Panc1 (cell line): ENCODE measurements at regions of chr15 and their contacts with region 1.

Region 1: DNA sequence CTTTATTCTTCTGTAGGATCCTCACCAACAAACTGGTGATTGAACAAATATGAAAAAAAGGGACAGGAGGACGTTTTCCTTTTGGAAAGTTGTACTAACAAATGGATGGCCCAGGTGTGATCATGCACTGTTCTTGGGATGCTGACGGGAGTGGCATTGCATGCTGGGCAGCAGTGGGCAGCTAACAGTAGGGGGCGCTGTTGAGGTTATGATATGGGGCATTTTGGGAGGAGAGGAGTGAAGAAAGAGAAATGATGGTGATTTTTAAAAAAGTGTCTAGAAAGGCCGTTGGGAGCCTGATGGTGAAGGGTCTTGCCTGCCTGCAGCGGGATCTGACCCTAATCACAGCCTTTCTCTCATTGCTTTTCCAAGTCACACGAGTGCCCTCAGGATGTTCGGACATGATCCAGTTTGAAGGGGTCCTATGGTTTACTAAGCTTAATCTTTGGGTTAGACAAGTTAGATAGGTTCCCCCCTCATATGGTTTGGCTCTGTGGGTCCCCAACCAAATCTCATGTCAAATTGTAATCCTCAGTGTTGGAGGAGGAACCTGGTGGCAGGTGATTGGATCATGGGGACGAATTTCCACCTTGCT is 46.2 kb upstream of the PRTG start:
- DNase-seq: no peak
- ATAC-seq: no peak
- H3K4me3 ChIP-seq: no peak overlapping the region
- H3K27ac ChIP-seq: no peak overlapping the region
- H3K4me1 ChIP-seq: no peaks in the 10 kb centered on the region
- H3K27me3 ChIP-seq: no peaks in the 10 kb centered on the region
- CTCF ChIP-seq: peak; percentile 84

Region 2: DNA sequence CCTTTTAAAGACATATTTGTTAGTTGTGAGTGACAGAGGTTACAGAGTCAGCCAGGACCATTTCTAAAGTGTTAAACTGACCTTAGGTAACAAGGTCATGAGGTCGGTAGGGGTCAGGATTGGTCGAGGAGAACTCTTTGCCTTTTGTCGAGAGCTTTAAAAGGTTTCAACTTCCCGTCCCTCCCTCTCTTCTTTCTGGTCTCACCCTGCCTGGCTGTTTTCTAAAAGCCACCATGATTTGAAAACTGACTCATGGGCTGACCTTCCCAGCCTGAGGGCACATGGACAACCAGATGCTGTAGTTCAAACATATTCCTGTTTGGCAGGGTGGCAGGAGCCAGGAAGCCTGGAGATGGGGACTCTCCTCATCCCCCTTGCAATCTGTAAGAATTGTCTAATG is 20.4 kb before region 1 on chr15:
- CTCF ChIA-PET with region 1: interaction called, 4 read pairs
- POLR2A ChIA-PET with region 1: interaction called, 4 read pairs
- in situ Hi-C with region 1: no loop called
- intact Hi-C with region 1: loop called (anchors 1 kb)
- DNase-seq: no peak
- ATAC-seq: no peak
- H3K4me3 ChIP-seq: no peak overlapping the region
- H3K27ac ChIP-seq: no peak overlapping the region
- H3K4me1 ChIP-seq: no peaks in the 10 kb centered on the region
- H3K27me3 ChIP-seq: no peaks in the 10 kb centered on the region
- CTCF ChIP-seq: no peak